ENCODE measurements at regions of chr20 and their contacts with region 1.

Region 1: DNA sequence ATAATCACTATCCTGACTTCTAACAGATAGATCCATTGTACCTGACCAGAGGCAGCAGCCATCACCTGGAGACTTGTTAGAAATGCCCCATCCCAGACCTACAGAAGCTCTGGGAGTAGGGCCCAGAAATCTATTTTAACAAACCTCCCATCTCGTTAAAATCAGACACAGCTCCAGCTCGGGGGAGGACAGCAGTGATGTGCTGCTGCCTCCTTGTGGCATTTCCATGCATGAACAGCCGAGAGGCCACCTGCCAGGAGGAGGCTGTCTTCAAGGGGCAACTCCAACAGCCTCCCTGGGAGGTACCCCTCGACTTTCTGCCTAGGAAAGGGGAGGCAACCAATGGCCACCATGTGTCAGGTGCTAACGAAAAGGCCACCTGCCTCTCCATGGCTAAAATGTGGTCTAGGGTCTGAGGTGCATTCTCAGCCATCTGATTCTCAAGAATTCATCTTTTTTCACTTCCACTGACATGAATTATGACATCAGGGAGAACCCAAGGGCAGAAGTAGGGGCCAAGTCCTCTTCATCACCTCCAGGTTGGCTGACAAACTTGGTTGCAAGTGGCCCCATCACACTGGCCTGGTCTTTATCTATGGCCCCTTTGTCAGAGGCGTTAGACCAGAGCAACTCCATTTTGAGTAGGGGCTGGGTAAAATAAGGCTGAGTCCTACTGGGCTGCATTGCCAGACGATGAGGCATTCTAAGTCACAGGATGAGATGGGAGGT is 12.2 kb upstream of the KCNK15 start:
- DNase-seq: peak; percentile 55 to 78
- H3K4me3 ChIP-seq: no peak overlapping the region
- H3K27ac ChIP-seq: no peak overlapping the region
- H3K4me1 ChIP-seq: peaks cover 45% of the 10 kb centered on the region
- H3K27me3 ChIP-seq: no peaks in the 10 kb centered on the region
- CTCF ChIP-seq: peak; percentile 96

Region 2: GRCh38 chr20:44475694-44476560 is 257.6 kb before region 1 on chr20 and contains the start of gene TTPAL:
- CTCF ChIA-PET with region 1: no interaction called
- POLR2A ChIA-PET with region 1: no interaction called
- intact Hi-C with region 1: loop called (anchors 5 kb)
- DNase-seq: peak; percentile 77 to 93
- H3K4me3 ChIP-seq: peak within 1 kb of the TSS; percentile 88
- H3K27ac ChIP-seq: peak within 1 kb of the TSS; percentile 37
- H3K4me1 ChIP-seq: peaks cover 22% of the 10 kb centered on the region
- H3K27me3 ChIP-seq: no peaks in the 10 kb centered on the region
- CTCF ChIP-seq: peak; percentile 31; the same call in 1 of the 2 replicates
- total RNA-seq, gene TTPAL: 28.5 and 31.3 TPM in 2 replicates

Region 3: GRCh38 chr20:44618318-44618731 is 115.2 kb before region 1 on chr20:
- CTCF ChIA-PET with region 1: no interaction called
- POLR2A ChIA-PET with region 1: no interaction called
- intact Hi-C with region 1: no loop called
- DNase-seq: no peak
- H3K4me3 ChIP-seq: no peak overlapping the region
- H3K27ac ChIP-seq: no peak overlapping the region
- H3K4me1 ChIP-seq: no peaks in the 10 kb centered on the region
- H3K27me3 ChIP-seq: no peaks in the 10 kb centered on the region
- CTCF ChIP-seq: no peak

Region 4: DNA sequence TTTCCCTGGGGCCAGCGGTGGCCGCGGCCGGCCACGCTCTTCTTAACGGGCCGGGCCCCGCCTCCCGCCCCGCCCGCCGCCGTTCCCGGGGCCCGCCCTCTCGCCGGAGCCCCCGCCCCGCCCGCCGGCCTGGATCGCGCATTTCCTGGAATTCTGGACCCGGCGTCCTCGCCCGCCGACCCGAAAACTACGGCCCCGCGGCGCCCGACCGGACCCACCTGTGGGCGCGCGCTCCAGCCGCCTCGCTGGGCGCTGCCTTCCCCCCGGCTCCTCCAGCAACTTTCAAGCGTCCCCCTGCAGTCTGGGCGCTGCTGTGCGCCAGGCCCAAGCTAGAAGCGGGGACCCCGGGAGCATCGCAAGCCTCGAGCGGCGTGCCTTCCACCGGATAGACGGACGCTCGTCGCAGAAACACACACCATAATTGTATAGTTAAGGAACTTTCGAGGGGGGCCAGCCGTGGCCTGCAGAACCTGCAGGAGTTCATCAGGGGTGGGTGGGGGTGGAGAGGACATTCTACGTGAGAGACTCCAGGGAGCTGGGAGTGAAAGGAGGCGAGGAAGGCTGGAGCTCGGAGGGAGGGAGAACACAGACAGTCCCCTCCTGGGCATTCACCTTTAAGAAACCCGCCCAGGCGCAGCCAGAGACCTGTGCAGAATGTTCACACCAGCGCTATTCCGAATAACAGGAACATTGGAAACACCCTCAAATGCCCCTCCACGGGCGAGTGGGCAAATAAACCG is 81.7 kb before region 1 on chr20 and contains the start of gene ADA:
- CTCF ChIA-PET with region 1: no interaction called
- POLR2A ChIA-PET with region 1: interaction called, 15 read pairs
- intact Hi-C with region 1: no loop called
- DNase-seq: peak; percentile 48 to 63
- H3K4me3 ChIP-seq: peak within 1 kb of the TSS; percentile 95
- H3K27ac ChIP-seq: no peak within 1 kb of the TSS
- H3K4me1 ChIP-seq: peaks cover 14% of the 10 kb centered on the region; the same call in 1 of the 2 replicates
- H3K27me3 ChIP-seq: no peaks in the 10 kb centered on the region
- CTCF ChIP-seq: no peak
- total RNA-seq, gene ADA: 28.2 and 32.9 TPM in 2 replicates

Region 5: DNA sequence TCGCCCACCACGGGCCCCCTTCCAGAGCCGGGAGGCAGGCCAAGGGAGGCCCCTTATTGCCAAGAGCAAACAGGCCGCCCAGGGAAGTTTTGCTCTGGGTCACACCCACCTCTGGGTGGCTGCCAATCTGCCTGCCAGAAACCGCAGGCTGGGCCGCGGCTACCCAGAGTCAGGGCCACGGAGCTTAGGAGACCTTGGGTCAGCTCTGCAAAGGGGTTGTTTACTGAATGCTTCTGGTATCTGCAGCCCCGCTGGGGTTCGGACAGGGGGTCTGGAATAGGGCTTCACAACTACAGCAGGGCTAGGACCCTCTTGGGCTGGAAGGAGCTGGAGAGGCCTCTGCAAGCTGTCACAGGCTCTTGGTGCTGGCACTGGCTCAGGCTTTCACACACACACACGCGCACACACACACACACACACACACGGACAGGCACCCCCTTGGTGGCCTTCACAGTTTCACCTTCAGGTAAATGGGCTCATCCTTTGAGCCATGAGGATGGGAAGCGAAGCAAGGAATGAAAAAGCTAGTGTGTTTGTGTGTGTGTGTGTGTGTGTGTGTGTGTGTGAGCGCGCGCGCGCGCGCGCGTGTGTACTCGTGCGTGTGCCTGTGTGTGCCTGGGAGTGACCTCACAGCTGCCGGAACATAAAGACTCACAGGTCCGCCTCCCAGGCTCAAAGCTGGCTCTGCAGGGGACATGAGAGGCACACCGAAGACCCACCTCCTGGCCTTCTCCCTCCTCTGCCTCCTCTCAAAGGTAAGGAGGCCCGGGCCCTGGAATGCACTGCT is 18.6 kb before region 1 on chr20 and contains the start of gene CCN5:
- CTCF ChIA-PET with region 1: interaction called, 11 read pairs
- POLR2A ChIA-PET with region 1: no interaction called
- intact Hi-C with region 1: no loop called
- DNase-seq: peak; percentile 81 to 89
- H3K4me3 ChIP-seq: no peak within 1 kb of the TSS; the same call in 1 of the 2 replicates
- H3K27ac ChIP-seq: no peak within 1 kb of the TSS
- H3K4me1 ChIP-seq: peaks cover 18% of the 10 kb centered on the region
- H3K27me3 ChIP-seq: no peaks in the 10 kb centered on the region
- CTCF ChIP-seq: no peak
- total RNA-seq, gene CCN5: 0.20 TPM in 1 of 2 replicates, not detected in the other

Region 6: GRCh38 chr20:44866703-44867335 is 133.3 kb after region 1 on chr20:
- CTCF ChIA-PET with region 1: interaction called, 5 read pairs
- POLR2A ChIA-PET with region 1: no interaction called
- intact Hi-C with region 1: loop called (anchors 1 kb)
- DNase-seq: no peak
- H3K4me3 ChIP-seq: no peak overlapping the region
- H3K27ac ChIP-seq: no peak overlapping the region
- H3K4me1 ChIP-seq: no peaks in the 10 kb centered on the region
- H3K27me3 ChIP-seq: 0 out of 2 replicates have a peak, but pooled peaks cover 17% of the 10 kb centered on the region
- CTCF ChIP-seq: no peak

Region 7: GRCh38 chr20:44914924-44915323 is 181.4 kb after region 1 on chr20:
- CTCF ChIA-PET with region 1: no interaction called
- POLR2A ChIA-PET with region 1: no interaction called
- intact Hi-C with region 1: no loop called
- DNase-seq: no peak
- H3K4me3 ChIP-seq: no peak overlapping the region
- H3K27ac ChIP-seq: no peak overlapping the region
- H3K4me1 ChIP-seq: peaks cover 4% of the 10 kb centered on the region; the same call in 1 of the 2 replicates
- H3K27me3 ChIP-seq: no peaks in the 10 kb centered on the region
- CTCF ChIP-seq: no peak

Measured in PC-9 (cell line).